B cell (primary cell): ENCODE measurements at regions of chr2 and their contacts with region 1.

Region 1: DNA sequence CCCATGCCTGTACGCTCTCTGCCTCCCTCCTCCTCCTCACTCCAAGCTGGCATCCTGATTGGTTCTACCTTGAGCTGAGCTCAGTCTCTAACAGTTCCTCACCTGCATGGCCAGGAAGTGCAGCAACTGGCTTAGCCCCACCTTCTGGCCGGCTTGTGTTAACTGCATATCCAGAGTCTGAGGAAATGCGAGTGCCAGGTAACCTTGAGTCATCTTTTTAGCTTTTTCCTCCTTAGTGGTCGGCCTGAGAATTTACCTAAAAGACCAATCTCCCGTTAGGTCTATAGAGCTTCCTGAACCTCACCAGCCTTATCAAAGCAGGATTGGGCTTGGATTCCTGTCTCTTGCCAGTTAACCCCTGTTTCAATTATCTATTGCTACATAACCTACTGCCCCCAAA is 89.5 kb upstream of the STK39 start:
- DNase-seq: peak; percentile 39
- ATAC-seq: peak; percentile 68
- H3K4me3 ChIP-seq: no peak overlapping the region
- H3K4me3 Mint-ChIP-seq: no peak overlapping the region
- H3K27ac ChIP-seq: no peak overlapping the region
- H3K27ac Mint-ChIP-seq: no peak overlapping the region
- H3K4me1 ChIP-seq: no peaks in the 10 kb centered on the region
- H3K4me1 Mint-ChIP-seq: peaks cover 3% of the 10 kb centered on the region
- H3K27me3 ChIP-seq: no peaks in the 10 kb centered on the region
- H3K27me3 Mint-ChIP-seq: peaks cover 10% of the 10 kb centered on the region
- CTCF ChIP-seq: peak; percentile 33

Region 2: GRCh38 chr2:168097431-168097830 is 239.4 kb before region 1 on chr2:
- CTCF ChIA-PET with region 1: no interaction called
- POLR2A ChIA-PET with region 1: no interaction called
- intact Hi-C with region 1: no loop called
- DNase-seq: no peak
- ATAC-seq: no peak
- H3K4me3 ChIP-seq: no peak overlapping the region
- H3K4me3 Mint-ChIP-seq: no peak overlapping the region
- H3K27ac ChIP-seq: no peak overlapping the region
- H3K27ac Mint-ChIP-seq: no peak overlapping the region
- H3K4me1 ChIP-seq: no peaks in the 10 kb centered on the region
- H3K4me1 Mint-ChIP-seq: no peaks in the 10 kb centered on the region
- H3K27me3 ChIP-seq: no peaks in the 10 kb centered on the region
- H3K27me3 Mint-ChIP-seq: no peaks in the 10 kb centered on the region
- CTCF ChIP-seq: no peak

Region 3: GRCh38 chr2:168160897-168161296 is 176.0 kb before region 1 on chr2:
- CTCF ChIA-PET with region 1: interaction called, 13 read pairs
- POLR2A ChIA-PET with region 1: no interaction called
- intact Hi-C with region 1: no loop called
- DNase-seq: no peak
- ATAC-seq: no peak
- H3K4me3 ChIP-seq: no peak overlapping the region
- H3K4me3 Mint-ChIP-seq: no peak overlapping the region
- H3K27ac ChIP-seq: no peak overlapping the region
- H3K27ac Mint-ChIP-seq: no peak overlapping the region
- H3K4me1 ChIP-seq: peaks cover 2 to 6% of the 10 kb centered on the region in 2 donors
- H3K4me1 Mint-ChIP-seq: peaks cover 8% of the 10 kb centered on the region
- H3K27me3 ChIP-seq: no peaks in the 10 kb centered on the region
- H3K27me3 Mint-ChIP-seq: no peaks in the 10 kb centered on the region
- CTCF ChIP-seq: peak; percentile 24